Body of pancreas (tissue), 4 donors: ENCODE measurements at regions of chr17 and their contacts with region 1.

Region 1: GRCh38 chr17:79915850-79916430 is 76.7 kb upstream of the CBX4 start:
- DNase-seq: peak; percentile 52 to 75 (median 71)
- ATAC-seq: peak; percentile 15
- H3K4me3 ChIP-seq: no peak overlapping the region
- H3K27ac ChIP-seq: peak overlapping the region in 3 of 4 donors; percentile 42 to 55 (median 48)
- H3K4me1 ChIP-seq: peaks cover 40% of the 10 kb centered on the region
- H3K27me3 ChIP-seq: no peaks in the 10 kb centered on the region
- CTCF ChIP-seq: peak in 4 of 7 experiments; percentile 37 to 50 (median 48)
- POLR2A ChIP-seq: peak in 1 of 3 donors; percentile 31

Region 2: DNA sequence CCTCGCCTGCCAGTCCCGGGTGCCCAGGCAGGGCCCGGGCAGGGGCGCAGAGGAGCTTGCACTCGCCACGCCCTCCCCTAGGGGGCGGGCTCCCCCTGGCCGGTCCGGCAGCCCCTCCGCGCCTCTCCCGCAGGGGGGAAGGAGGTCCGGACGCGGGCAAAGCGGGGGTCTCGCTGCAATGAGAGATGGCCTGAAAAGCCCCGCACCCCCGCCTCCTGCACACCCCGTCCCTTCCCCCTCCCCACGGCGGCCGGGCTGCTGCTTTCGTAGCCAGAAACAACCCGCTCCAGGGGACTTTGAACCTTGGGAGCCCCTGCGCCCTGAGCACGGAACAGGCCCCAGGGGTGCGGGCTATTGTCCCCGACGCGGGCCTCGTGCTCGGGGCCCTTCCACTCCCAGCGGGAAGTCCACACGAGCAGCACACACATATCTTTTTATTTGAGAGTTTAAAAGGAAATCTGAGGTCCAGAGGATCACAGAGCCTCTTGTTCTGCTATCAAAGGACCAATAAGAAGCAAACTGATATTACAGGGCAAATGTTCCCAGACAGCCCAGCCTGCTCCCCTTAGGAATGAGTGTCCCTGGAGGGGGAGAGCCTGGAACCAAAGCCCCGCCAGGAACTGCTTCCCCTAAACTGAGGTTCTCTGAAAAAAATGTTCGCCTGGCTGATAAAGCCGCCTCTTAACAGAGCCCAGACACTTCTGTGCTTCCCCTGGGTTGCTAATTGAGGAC is 70.9 kb before region 1 on chr17:
- intact Hi-C with region 1: loop called (anchors 5 kb)
- DNase-seq: peak in 3 of 4 donors; percentile 53 to 62 (median 56)
- ATAC-seq: peak; percentile 59
- H3K4me3 ChIP-seq: no peak overlapping the region
- H3K27ac ChIP-seq: peak overlapping the region in 3 of 4 donors; percentile 55 to 74 (median 61)
- H3K4me1 ChIP-seq: peaks cover 55% of the 10 kb centered on the region
- H3K27me3 ChIP-seq: peaks cover 0 to 34% of the 10 kb centered on the region in 2 donors
- CTCF ChIP-seq: peak; percentile 35 to 80 (median 61)
- POLR2A ChIP-seq: no peak